GM12878 (cell line): ENCODE measurements at regions of chr10 and their contacts with region 1.

Region 1: DNA sequence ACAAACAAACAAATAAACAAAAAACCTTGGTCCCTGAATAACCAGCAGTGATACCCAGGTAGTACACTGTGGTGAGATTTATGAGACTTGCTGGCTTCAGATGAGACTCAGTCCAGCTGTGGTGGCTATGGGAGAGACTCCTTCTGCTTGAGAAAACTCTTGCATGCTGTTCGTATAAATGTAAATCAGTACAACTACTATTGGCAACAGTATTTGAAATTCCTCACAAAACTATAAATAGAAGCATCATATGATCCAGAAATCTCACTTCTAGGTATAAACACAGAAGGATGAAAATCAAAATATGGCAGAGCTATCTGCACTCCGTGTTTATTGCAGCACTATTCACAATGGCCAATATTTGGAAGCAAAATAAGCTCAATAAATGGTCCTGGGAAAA is 692.1 kb downstream of the PCDH15 start:
- DNase-seq: no peak
- ATAC-seq: no peak
- H3K4me3 ChIP-seq: no peak overlapping the region
- H3K27ac ChIP-seq: no peak overlapping the region
- H3K4me1 ChIP-seq: no peaks in the 10 kb centered on the region
- H3K27me3 ChIP-seq: no peaks in the 10 kb centered on the region
- CTCF ChIP-seq: no peak
- EP300 ChIP-seq: no peak
- POLR2A ChIP-seq: no peak
- RAD21 ChIP-seq: no peak

Region 2: DNA sequence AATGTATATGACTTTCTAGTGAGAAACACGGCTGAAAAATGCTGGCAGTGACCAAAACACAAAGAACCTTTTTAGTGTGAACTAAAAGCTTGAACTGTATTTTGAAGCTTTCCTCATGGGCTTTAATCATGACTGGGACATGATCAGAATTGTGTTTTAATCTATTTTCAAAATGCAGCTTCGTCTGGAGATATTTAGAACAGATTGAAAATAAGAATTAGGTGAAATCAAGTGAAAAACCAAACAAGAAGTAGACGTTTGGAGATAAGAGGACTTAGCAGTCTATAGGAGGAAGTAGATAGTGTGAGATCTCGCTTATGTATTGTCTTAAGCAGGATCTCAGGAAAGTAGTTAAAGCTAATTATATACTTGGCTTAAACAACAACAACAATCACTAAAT is 471.0 kb before region 1 on chr10:
- CTCF ChIA-PET with region 1: no interaction called
- POLR2A ChIA-PET with region 1: no interaction called
- RAD21 ChIA-PET with region 1: no interaction called
- SMC1A ChIA-PET with region 1: no interaction called
- in situ Hi-C with region 1: no loop called
- intact Hi-C with region 1: no loop called
- DNase-seq: no peak
- ATAC-seq: no peak
- H3K4me3 ChIP-seq: no peak overlapping the region
- H3K27ac ChIP-seq: no peak overlapping the region
- H3K4me1 ChIP-seq: no peaks in the 10 kb centered on the region
- H3K27me3 ChIP-seq: no peaks in the 10 kb centered on the region
- CTCF ChIP-seq: no peak
- EP300 ChIP-seq: no peak
- POLR2A ChIP-seq: no peak
- RAD21 ChIP-seq: no peak

Region 3: GRCh38 chr10:54124209-54124885 is 15.4 kb after region 1 on chr10:
- CTCF ChIA-PET with region 1: interaction called, 3 read pairs
- POLR2A ChIA-PET with region 1: interaction called, 4 read pairs
- RAD21 ChIA-PET with region 1: interaction called, 12 read pairs
- SMC1A ChIA-PET with region 1: interaction called, 6 read pairs
- in situ Hi-C with region 1: no loop called
- intact Hi-C with region 1: no loop called
- DNase-seq: no peak
- ATAC-seq: no peak
- H3K4me3 ChIP-seq: no peak overlapping the region
- H3K27ac ChIP-seq: no peak overlapping the region
- H3K4me1 ChIP-seq: no peaks in the 10 kb centered on the region
- H3K27me3 ChIP-seq: no peaks in the 10 kb centered on the region
- CTCF ChIP-seq: no peak
- EP300 ChIP-seq: no peak
- POLR2A ChIP-seq: no peak
- RAD21 ChIP-seq: no peak